HCT116 (cell line): ENCODE measurements at regions of chr6 and their contacts with region 1.

Region 1: DNA sequence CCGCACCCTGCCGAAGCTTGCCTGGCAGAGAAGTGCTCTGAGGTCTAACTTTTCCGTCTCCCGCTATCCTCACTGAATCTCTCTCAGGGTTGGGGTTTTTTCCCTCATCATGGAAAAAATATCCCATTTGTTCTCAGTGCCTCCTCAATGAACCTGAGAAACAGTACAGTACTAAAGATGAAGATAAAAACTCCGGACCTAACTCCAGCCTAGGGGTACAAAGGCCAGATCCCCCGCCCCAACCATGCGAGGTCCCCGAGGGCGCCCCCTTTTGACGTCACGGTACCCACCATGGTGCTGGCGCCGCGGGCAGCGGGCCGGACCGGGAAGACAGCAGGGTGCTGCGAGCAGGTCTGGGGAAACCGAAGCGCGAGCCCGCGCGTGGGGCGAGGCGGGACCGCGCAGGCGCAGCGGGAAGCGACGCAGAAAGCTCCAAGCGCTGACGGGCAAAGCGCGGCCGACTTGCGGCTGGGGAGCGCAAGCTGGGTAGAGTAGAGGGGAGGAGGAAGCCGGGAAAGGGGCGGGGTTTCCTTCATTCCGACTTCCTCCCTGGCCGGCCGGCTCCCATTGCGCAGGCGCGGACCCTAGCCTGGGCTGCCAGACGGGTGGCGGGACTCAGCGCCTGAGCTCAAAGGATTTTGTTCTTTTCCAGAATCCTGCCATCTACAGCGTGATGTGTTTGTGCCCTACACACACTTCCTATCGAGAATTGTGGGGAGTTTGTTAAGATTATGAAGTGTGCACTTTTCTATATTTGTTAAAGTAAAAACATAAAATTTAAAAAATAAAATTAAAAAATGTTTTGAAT is at the start of gene LSM2:
- DNase-seq: peak; percentile 88
- ATAC-seq: peak; percentile 97
- H3K4me3 ChIP-seq: peak within 1 kb of the TSS; percentile 93 to 94
- H3K27ac ChIP-seq: peak within 1 kb of the TSS; percentile 85
- H3K4me1 ChIP-seq: peaks cover 13 to 16% of the 10 kb centered on the region in 2 experiments
- H3K27me3 ChIP-seq: no peaks in the 10 kb centered on the region
- CTCF ChIP-seq: 0 out of 6 replicates have a peak, but pooled peaks of 2 of the 3 experiments have one; percentile 10 to 23
- POLR2A ChIP-seq: peak; percentile 92
- RAD21 ChIP-seq: peak; percentile 28
- total RNA-seq, gene LSM2: 89.7 TPM

Region 2: DNA sequence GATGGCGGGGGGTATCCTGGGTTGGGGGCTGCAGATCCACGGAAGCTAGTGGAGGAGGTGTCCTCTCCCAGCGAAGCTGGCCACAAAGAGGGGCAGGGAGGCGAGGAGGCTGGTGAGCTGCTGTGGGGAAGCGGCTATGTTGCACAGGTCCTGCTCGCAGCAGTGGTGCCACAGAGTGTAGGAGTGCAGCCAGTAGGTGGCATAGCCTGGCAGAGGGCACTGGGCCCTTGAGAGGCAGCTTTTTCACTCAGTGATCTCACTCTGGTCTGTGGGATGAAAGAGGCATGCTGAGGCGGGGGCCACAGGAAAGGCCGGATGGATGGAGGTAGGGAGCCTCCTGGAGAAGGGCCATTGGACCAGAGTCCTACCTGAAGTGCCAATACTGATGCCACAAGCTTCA is 94.4 kb before region 1 on chr6:
- CTCF ChIA-PET with region 1: no interaction called
- POLR2A ChIA-PET with region 1: no interaction called
- RAD21 ChIA-PET with region 1: no interaction called
- intact Hi-C with region 1: no loop called
- DNase-seq: no peak
- ATAC-seq: peak; percentile 70
- H3K4me3 ChIP-seq: no peak overlapping the region
- H3K27ac ChIP-seq: no peak overlapping the region
- H3K4me1 ChIP-seq: peaks cover 16 to 27% of the 10 kb centered on the region in 2 experiments; a peak in 3 of 4 replicates
- H3K27me3 ChIP-seq: no peaks in the 10 kb centered on the region
- CTCF ChIP-seq: peak in 2 of 3 experiments; percentile 22 to 38; a peak in 4 of 6 replicates
- POLR2A ChIP-seq: no peak
- RAD21 ChIP-seq: peak; percentile 60

Region 3: GRCh38 chr6:31795616-31796298 is 10.9 kb before region 1 on chr6 and contains the start of gene VARS1:
- CTCF ChIA-PET with region 1: interaction called, 16 read pairs
- POLR2A ChIA-PET with region 1: interaction called, 9 read pairs
- RAD21 ChIA-PET with region 1: interaction called in 1 of 2 experiments, 6 read pairs
- intact Hi-C with region 1: no loop called
- DNase-seq: peak; percentile 82
- ATAC-seq: peak; percentile 80
- H3K4me3 ChIP-seq: peak within 1 kb of the TSS; percentile 70 to 93
- H3K27ac ChIP-seq: peak within 1 kb of the TSS; percentile 98
- H3K4me1 ChIP-seq: peaks cover 24 to 45% of the 10 kb centered on the region in 2 experiments
- H3K27me3 ChIP-seq: no peaks in the 10 kb centered on the region
- CTCF ChIP-seq: peak; percentile 56 to 98 (median 82)
- POLR2A ChIP-seq: no peak
- RAD21 ChIP-seq: peak; percentile 92
- total RNA-seq, gene VARS1: 254 TPM

Region 4: DNA sequence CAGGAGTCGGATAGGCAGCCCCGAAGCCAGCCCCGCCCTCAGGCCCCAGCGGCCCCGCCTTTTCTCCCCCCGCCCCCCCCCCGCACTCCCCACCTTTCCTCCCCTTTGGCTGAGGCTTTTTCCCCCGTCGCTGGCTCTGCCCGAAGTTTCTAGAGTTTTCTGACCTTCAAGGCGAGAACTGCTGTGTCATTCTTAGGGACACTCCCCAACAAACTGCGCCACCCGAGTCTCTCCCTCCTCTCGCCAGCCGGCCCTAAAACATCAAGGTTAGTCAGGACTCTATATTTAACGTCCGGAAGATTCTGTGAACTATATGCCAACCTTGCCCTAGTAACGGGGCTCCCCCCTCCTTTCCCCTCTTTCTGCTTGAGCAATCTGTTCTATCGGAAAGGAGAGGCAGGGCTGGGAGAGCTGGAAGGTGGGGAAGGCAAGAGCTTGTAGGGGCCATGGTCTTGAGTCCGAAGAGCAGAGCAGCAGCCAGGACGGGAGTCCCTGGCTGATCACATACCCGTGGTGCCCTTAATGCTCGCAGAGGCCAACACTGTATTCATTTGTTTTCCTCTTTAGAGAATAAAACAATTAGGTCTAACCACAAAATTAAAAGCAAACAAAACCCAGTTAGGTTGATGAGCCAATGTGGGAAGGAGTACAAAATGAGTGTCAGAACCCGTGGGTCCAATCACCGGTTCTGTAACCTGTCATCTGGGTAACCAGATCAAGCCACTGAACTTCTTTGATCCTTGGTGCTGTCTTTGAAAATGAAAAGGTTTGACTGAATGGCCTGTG is 15.6 kb after region 1 on chr6:
- CTCF ChIA-PET with region 1: interaction called, 5 read pairs
- POLR2A ChIA-PET with region 1: interaction called, 49 read pairs
- RAD21 ChIA-PET with region 1: interaction called in 1 of 2 experiments, 4 read pairs
- intact Hi-C with region 1: loop called (anchors 1 kb)
- DNase-seq: no peak
- ATAC-seq: peak; percentile 34
- H3K4me3 ChIP-seq: peak overlapping the region; percentile 58 to 65
- H3K27ac ChIP-seq: peak overlapping the region; percentile 94
- H3K4me1 ChIP-seq: peaks cover 63 to 73% of the 10 kb centered on the region in 2 experiments
- H3K27me3 ChIP-seq: no peaks in the 10 kb centered on the region
- CTCF ChIP-seq: no peak
- POLR2A ChIP-seq: no peak
- RAD21 ChIP-seq: no peak